SK-N-SH (cell line): ENCODE measurements at regions of chr18 and their contacts with region 1.

Region 1: GRCh38 chr18:7789856-7790552 is 222.9 kb downstream of the PTPRM start:
- DNase-seq: peak; percentile 33
- H3K4me3 ChIP-seq: no peak overlapping the region; a peak in 1 of 4 replicates
- H3K27ac ChIP-seq: no peak overlapping the region
- H3K4me1 ChIP-seq: peaks cover 0 to 3% of the 10 kb centered on the region in 2 experiments; a peak in 1 of 4 replicates
- H3K27me3 ChIP-seq: no peaks in the 10 kb centered on the region
- CTCF ChIP-seq: peak; percentile 58
- EP300 ChIP-seq: no peak
- RAD21 ChIP-seq: peak; percentile 75

Region 2: GRCh38 chr18:7778181-7778580 is 11.8 kb before region 1 on chr18:
- CTCF ChIA-PET with region 1: interaction called, 11 read pairs
- POLR2A ChIA-PET with region 1: no interaction called
- DNase-seq: no peak
- H3K4me3 ChIP-seq: no peak overlapping the region
- H3K27ac ChIP-seq: no peak overlapping the region
- H3K4me1 ChIP-seq: no peaks in the 10 kb centered on the region; a peak in 2 of 4 replicates
- H3K27me3 ChIP-seq: no peaks in the 10 kb centered on the region
- CTCF ChIP-seq: no peak
- EP300 ChIP-seq: no peak
- RAD21 ChIP-seq: no peak

Region 3: DNA sequence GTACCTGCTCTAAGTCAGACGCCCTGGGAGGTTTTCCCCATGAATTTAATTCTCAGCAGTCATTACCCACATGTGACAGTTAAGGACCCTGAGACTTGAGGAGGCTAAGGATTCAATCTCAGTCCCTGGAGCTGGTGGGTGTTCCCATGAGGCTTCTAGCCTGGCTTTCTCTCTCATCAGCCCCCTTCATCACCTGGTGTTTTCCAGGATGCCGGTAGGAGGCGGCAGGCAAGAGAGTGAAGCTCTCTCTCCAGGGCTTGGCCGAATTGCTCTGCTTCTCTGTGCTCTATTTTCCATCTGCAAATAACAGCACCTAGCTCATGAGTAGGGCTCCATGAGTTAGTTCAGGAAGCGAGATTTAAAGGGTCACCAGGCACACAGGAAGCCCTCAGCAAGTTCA is 19.0 kb after region 1 on chr18:
- CTCF ChIA-PET with region 1: interaction called, 13 read pairs
- POLR2A ChIA-PET with region 1: no interaction called
- DNase-seq: no peak
- H3K4me3 ChIP-seq: no peak overlapping the region
- H3K27ac ChIP-seq: no peak overlapping the region
- H3K4me1 ChIP-seq: peaks cover 0 to 24% of the 10 kb centered on the region in 2 experiments; a peak in 2 of 4 replicates
- H3K27me3 ChIP-seq: no peaks in the 10 kb centered on the region
- CTCF ChIP-seq: no peak
- EP300 ChIP-seq: no peak
- RAD21 ChIP-seq: no peak